Endothelial cell of umbilical vein (primary cell): ENCODE measurements at regions of chr14 and their contacts with region 1.

Region 1: GRCh38 chr14:105490572-105491366 is at the start of gene TEDC1:
- DNase-seq: peak; percentile 100
- H3K4me3 ChIP-seq: peak within 1 kb of the TSS; percentile 50 to 67 (median 52)
- H3K27ac ChIP-seq: peak within 1 kb of the TSS; percentile 82
- H3K4me1 ChIP-seq: peaks cover 2% of the 10 kb centered on the region
- H3K27me3 ChIP-seq: peaks cover 0 to 12% of the 10 kb centered on the region in 2 experiments
- CTCF ChIP-seq: peak; percentile 78 to 96
- POLR2A ChIP-seq: peak; percentile 75
- total RNA-seq, gene TEDC1: 25.3 and 29.9 TPM in 2 replicates

Region 2: GRCh38 chr14:104677512-104678332 is 813.0 kb before region 1 on chr14:
- CTCF ChIA-PET with region 1: no interaction called
- POLR2A ChIA-PET with region 1: no interaction called
- dilution Hi-C with region 1: no loop called
- intact Hi-C with region 1: loop called (anchors 5 kb)
- DNase-seq: peak; percentile 92
- H3K4me3 ChIP-seq: peak overlapping the region in 2 of 3 experiments; percentile 19 to 38
- H3K27ac ChIP-seq: peak overlapping the region; percentile 95
- H3K4me1 ChIP-seq: peaks cover 40% of the 10 kb centered on the region
- H3K27me3 ChIP-seq: no peaks in the 10 kb centered on the region
- CTCF ChIP-seq: no peak
- POLR2A ChIP-seq: peak; percentile 71

Region 3: GRCh38 chr14:105300792-105301533 is 189.8 kb before region 1 on chr14 and contains the start of gene BRF1:
- CTCF ChIA-PET with region 1: interaction called, 5 read pairs
- POLR2A ChIA-PET with region 1: no interaction called
- dilution Hi-C with region 1: no loop called
- intact Hi-C with region 1: loop called (anchors 2 kb)
- DNase-seq: peak; percentile 95
- H3K4me3 ChIP-seq: peak within 1 kb of the TSS; percentile 25 to 79 (median 54)
- H3K27ac ChIP-seq: peak within 1 kb of the TSS; percentile 62
- H3K4me1 ChIP-seq: peaks cover 9% of the 10 kb centered on the region
- H3K27me3 ChIP-seq: no peaks in the 10 kb centered on the region
- CTCF ChIP-seq: no peak
- POLR2A ChIP-seq: peak; percentile 39
- total RNA-seq, gene BRF1: 37.9 and 47.2 TPM in 2 replicates

Region 4: GRCh38 chr14:105398044-105398725 is 92.6 kb before region 1 on chr14 and contains the start of gene TEX22:
- CTCF ChIA-PET with region 1: no interaction called
- POLR2A ChIA-PET with region 1: no interaction called
- dilution Hi-C with region 1: no loop called
- intact Hi-C with region 1: loop called (anchors 1 kb)
- DNase-seq: peak; percentile 79
- H3K4me3 ChIP-seq: peak within 1 kb of the TSS; percentile 51 to 67 (median 62)
- H3K27ac ChIP-seq: peak within 1 kb of the TSS; percentile 60
- H3K4me1 ChIP-seq: peaks cover 21% of the 10 kb centered on the region
- H3K27me3 ChIP-seq: no peaks in the 10 kb centered on the region
- CTCF ChIP-seq: peak in 1 of 2 donors; percentile 37
- POLR2A ChIP-seq: peak; percentile 89
- total RNA-seq, gene TEX22: 1.1 and 2.1 TPM in 2 replicates

Region 5: GRCh38 chr14:105448706-105449111 is 42.1 kb before region 1 on chr14:
- CTCF ChIA-PET with region 1: interaction called, 31 read pairs
- POLR2A ChIA-PET with region 1: no interaction called
- dilution Hi-C with region 1: no loop called
- intact Hi-C with region 1: loop called (anchors 1 kb)
- DNase-seq: peak; percentile 74
- H3K4me3 ChIP-seq: no peak overlapping the region
- H3K27ac ChIP-seq: no peak overlapping the region
- H3K4me1 ChIP-seq: no peaks in the 10 kb centered on the region
- H3K27me3 ChIP-seq: no peaks in the 10 kb centered on the region
- CTCF ChIP-seq: peak; percentile 83 to 92
- POLR2A ChIP-seq: no peak

Region 6: GRCh38 chr14:105473677-105474482 is 16.9 kb before region 1 on chr14:
- CTCF ChIA-PET with region 1: interaction called, 27 read pairs
- POLR2A ChIA-PET with region 1: interaction called, 9 read pairs
- dilution Hi-C with region 1: no loop called
- intact Hi-C with region 1: loop called (anchors 1 kb)
- DNase-seq: peak; percentile 91
- H3K4me3 ChIP-seq: peak overlapping the region; percentile 21 to 93 (median 34)
- H3K27ac ChIP-seq: peak overlapping the region; percentile 90
- H3K4me1 ChIP-seq: peaks cover 19% of the 10 kb centered on the region
- H3K27me3 ChIP-seq: no peaks in the 10 kb centered on the region
- CTCF ChIP-seq: no peak
- POLR2A ChIP-seq: no peak

Region 7: GRCh38 chr14:105783707-105784106 is 292.9 kb after region 1 on chr14:
- CTCF ChIA-PET with region 1: no interaction called
- POLR2A ChIA-PET with region 1: no interaction called
- dilution Hi-C with region 1: no loop called
- intact Hi-C with region 1: no loop called
- DNase-seq: no peak
- H3K4me3 ChIP-seq: no peak overlapping the region
- H3K27ac ChIP-seq: no peak overlapping the region
- H3K4me1 ChIP-seq: no peaks in the 10 kb centered on the region
- H3K27me3 ChIP-seq: no peaks in the 10 kb centered on the region
- CTCF ChIP-seq: no peak
- POLR2A ChIP-seq: no peak